Activated CD4-positive, alpha-beta T cell treated with anti-CD3 and anti-CD28 coated beads for 36 hours (primary cell): ENCODE measurements at regions of chr22 and their contacts with region 1.

Region 1: DNA sequence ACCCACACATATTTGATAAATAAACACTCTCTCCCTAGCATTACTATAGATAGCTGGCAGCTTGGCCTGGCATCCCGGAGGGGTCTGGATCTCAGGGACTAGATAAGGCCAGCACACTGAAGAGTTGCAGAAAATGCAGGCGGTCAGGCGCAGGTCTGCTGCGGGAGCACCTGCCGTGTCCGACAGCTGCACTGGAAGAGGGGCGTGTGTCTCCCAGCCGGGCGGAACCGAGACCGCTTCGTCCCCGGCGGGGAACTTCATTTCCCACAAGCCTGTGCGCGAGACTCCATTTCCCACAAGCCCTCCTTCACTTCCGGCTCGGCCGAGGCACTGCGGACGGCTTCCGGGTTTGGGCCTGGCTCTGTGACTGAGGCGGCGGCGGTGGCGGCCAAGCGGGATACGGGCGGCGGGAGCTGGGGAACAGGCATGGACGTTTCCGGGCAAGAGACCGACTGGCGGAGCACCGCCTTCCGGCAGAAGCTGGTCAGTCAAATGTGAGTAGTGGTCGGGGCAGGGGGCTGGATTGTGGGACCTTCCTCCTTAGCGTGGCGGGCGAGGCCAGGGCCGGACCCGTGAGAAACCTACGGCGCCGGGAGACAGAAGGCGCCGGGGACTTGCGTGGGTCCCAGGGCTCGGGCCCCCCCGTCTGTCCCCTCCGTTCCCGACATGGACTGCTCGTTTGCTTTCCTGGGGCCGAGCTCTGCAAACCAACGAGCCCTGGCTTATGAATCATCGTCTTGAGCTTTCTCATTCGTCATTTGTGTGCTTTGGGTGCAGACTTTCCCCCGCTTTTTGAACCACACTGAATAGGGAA is at the start of gene MED15:
- DNase-seq: peak; percentile 95
- ATAC-seq: peak; percentile 85
- H3K4me3 Mint-ChIP-seq: peak within 1 kb of the TSS; percentile 85
- H3K27ac Mint-ChIP-seq: peak within 1 kb of the TSS; percentile 96
- H3K4me1 Mint-ChIP-seq: peaks cover 50% of the 10 kb centered on the region
- H3K27me3 Mint-ChIP-seq: no peaks in the 10 kb centered on the region
- total RNA-seq, gene MED15: 84.4 to 107 TPM

Region 2: GRCh38 chr22:20298803-20299735 is 208.4 kb before region 1 on chr22:
- CTCF ChIA-PET with region 1: no interaction called
- POLR2A ChIA-PET with region 1: no interaction called
- intact Hi-C with region 1: loop called in 1 of 2 experiments (anchors 1 kb)
- DNase-seq: peak; percentile 95
- ATAC-seq: peak; percentile 91
- H3K4me3 Mint-ChIP-seq: peak overlapping the region; percentile 71
- H3K27ac Mint-ChIP-seq: peak overlapping the region; percentile 43
- H3K4me1 Mint-ChIP-seq: no peaks in the 10 kb centered on the region
- H3K27me3 Mint-ChIP-seq: peaks cover 7% of the 10 kb centered on the region

Region 3: DNA sequence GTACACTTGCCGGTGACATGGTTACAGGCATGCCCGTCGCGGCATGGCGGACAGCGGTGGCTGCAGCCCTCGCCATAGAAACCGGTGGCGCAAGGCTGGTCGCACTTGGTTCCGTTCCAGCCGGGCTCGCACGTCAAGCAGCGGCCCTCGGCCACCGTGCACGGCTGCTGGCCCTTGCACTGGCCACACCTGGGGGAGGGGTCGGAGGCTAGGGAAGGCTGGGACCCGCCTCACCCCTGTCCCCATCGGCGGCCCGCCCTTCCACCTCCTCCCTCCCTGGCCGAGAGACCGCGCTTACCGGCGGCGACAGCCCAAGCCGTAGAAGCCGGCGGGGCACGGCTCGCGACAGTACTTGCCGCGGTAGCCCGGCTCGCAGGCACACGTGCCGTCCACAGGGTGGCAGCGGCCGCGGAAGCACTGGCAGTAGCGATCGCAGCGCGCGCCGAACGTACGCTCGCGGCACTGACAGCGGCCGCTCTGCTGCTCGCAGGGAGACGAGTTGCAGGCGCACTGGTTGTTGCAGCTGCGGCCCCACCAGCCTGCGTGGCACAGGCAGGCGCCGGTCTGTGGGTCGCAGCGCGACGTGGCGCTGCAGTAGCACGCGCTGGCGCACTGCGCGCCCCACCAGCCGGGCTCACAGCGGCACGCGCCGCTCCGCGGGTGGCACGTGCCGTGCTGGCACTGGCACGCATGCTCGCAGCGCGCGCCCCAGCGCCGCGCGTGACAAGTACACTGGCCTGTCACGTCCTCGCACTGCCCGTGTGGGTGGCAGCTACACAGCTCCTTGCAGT is 76.5 kb before region 1 on chr22:
- CTCF ChIA-PET with region 1: interaction called, 4 read pairs
- POLR2A ChIA-PET with region 1: interaction called, 3 read pairs
- intact Hi-C with region 1: loop called in 1 of 2 experiments (anchors 2 kb)
- DNase-seq: peak; percentile 79
- ATAC-seq: peak; percentile 57
- H3K4me3 Mint-ChIP-seq: peak overlapping the region; percentile 45
- H3K27ac Mint-ChIP-seq: no peak overlapping the region
- H3K4me1 Mint-ChIP-seq: peaks cover 12% of the 10 kb centered on the region
- H3K27me3 Mint-ChIP-seq: peaks cover 51% of the 10 kb centered on the region

Region 4: GRCh38 chr22:20550821-20551744 is 43.6 kb after region 1 on chr22:
- CTCF ChIA-PET with region 1: interaction called, 13 read pairs
- POLR2A ChIA-PET with region 1: interaction called, 14 read pairs
- intact Hi-C with region 1: loop called (anchors 1 to 2 kb)
- DNase-seq: peak; percentile 79
- ATAC-seq: peak; percentile 85
- H3K4me3 Mint-ChIP-seq: peak overlapping the region; percentile 60
- H3K27ac Mint-ChIP-seq: peak overlapping the region; percentile 99
- H3K4me1 Mint-ChIP-seq: peaks cover 92% of the 10 kb centered on the region
- H3K27me3 Mint-ChIP-seq: no peaks in the 10 kb centered on the region

Region 5: DNA sequence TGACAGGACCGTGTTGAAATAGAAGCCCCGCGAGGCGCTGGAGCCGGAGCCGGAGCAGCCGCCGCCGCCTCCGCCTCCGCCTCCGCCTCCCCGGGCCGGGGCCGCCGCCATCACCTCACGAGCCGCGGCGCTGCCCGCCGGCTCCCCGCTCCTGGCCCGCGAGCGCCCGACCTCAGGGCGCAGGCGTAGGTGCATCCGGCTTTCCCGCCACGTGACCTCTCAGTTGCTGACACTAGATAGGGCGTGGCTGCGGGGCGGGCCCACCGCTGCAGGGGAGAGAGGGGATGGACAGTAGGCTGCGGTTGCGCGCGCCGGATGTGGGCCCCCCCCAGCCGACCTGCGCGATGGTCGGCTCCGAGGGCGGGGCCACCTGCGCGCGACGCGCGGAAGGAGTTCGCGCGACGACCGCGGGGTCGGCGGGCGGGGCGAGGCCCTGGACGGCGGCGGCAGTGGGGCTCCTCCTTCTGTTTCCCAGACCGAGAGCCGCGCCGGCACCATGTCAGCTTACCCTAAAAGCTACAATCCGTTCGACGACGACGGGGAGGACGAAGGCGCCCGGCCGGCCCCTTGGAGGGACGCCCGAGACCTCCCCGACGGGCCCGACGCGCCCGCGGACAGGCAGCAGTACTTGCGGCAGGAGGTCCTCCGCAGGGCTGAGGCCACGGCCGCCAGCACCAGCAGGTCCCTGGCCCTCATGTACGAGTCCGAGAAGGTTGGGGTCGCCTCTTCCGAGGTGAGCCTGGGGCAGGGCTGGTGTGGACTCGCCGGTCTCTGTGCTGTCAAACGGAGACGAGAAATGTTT is 351.4 kb after region 1 on chr22 and contains the starts of genes PI4KA and SNAP29:
- CTCF ChIA-PET with region 1: no interaction called
- POLR2A ChIA-PET with region 1: no interaction called
- intact Hi-C with region 1: loop called in 1 of 2 experiments (anchors 1 kb)
- DNase-seq: peak; percentile 99
- ATAC-seq: peak; percentile 95
- H3K4me3 Mint-ChIP-seq: peak within 1 kb of the TSS; percentile 87
- H3K27ac Mint-ChIP-seq: peak within 1 kb of the TSS; percentile 79
- H3K4me1 Mint-ChIP-seq: peaks cover 46% of the 10 kb centered on the region
- H3K27me3 Mint-ChIP-seq: no peaks in the 10 kb centered on the region
- total RNA-seq, gene PI4KA: 52.8 TPM
- total RNA-seq, gene SNAP29: 22.8 to 33.8 TPM